GM12878 (cell line): ENCODE measurements at regions of chr20 and their contacts with region 1.

Region 1: DNA sequence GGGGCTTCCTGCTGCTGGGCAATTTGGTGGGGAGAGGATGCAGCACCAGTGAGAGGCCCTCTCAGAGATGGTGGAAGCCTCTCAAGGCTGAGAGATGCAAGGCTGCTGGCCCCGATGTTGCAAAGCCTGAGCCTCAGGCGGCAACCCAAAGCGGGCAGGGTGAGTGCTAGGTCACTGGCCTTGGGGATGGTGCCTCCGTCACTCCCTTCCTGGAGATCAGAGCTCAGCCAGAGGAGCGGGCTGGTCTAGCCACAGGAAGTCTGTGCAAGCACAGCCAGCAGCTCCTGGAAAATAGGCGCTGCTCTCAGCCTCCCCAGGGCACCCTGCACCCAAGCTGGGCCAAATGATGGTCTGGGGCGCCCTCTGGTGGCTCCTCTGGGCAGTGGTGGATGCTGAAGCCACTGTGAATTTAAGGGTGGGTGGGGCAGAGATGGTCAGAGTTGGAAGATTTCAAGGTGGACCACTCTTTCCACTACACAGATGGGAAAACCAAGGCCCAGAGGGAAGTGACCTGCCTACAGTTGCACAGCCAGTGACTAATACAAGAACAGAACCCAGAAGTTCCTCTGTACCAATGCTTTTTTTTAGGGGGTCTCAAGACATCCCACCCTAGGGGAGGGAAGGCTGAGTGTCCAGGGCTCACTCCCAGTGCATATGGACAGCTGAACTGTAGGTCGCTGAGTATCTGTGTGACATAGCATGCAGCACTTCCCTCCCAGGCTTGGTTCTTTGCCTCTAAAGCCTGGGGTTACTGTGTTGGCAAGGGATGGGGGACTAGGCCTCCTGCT is 20.8 kb downstream of the C20orf203 start:
- DNase-seq: no peak
- ATAC-seq: peak; percentile 98
- H3K4me3 ChIP-seq: no peak overlapping the region
- H3K27ac ChIP-seq: no peak overlapping the region
- H3K4me1 ChIP-seq: no peaks in the 10 kb centered on the region; the same call in 1 of the 2 replicates
- H3K27me3 ChIP-seq: no peaks in the 10 kb centered on the region
- CTCF ChIP-seq: peak; percentile 91 to 98 (median 93)
- EP300 ChIP-seq: no peak
- POLR2A ChIP-seq: no peak
- RAD21 ChIP-seq: peak; percentile 100

Region 2: GRCh38 chr20:32045999-32046398 is 606.9 kb before region 1 on chr20:
- CTCF ChIA-PET with region 1: no interaction called
- POLR2A ChIA-PET with region 1: no interaction called
- RAD21 ChIA-PET with region 1: no interaction called
- SMC1A ChIA-PET with region 1: no interaction called
- in situ Hi-C with region 1: no loop called
- intact Hi-C with region 1: no loop called
- DNase-seq: no peak
- ATAC-seq: no peak
- H3K4me3 ChIP-seq: no peak overlapping the region
- H3K27ac ChIP-seq: no peak overlapping the region
- H3K4me1 ChIP-seq: peaks cover 5% of the 10 kb centered on the region
- H3K27me3 ChIP-seq: no peaks in the 10 kb centered on the region; a peak in 1 of 4 replicates
- CTCF ChIP-seq: no peak
- EP300 ChIP-seq: no peak
- POLR2A ChIP-seq: no peak
- RAD21 ChIP-seq: no peak

Region 3: GRCh38 chr20:32336918-32337347 is 316.0 kb before region 1 on chr20:
- CTCF ChIA-PET with region 1: interaction called, 5 read pairs
- POLR2A ChIA-PET with region 1: no interaction called
- RAD21 ChIA-PET with region 1: no interaction called
- SMC1A ChIA-PET with region 1: interaction called, 4 read pairs
- in situ Hi-C with region 1: no loop called
- intact Hi-C with region 1: loop called (anchors 5 kb)
- DNase-seq: no peak
- ATAC-seq: peak; percentile 58
- H3K4me3 ChIP-seq: no peak overlapping the region
- H3K27ac ChIP-seq: no peak overlapping the region
- H3K4me1 ChIP-seq: peaks cover 29% of the 10 kb centered on the region
- H3K27me3 ChIP-seq: no peaks in the 10 kb centered on the region
- CTCF ChIP-seq: peak; percentile 62 to 71 (median 65)
- EP300 ChIP-seq: no peak
- POLR2A ChIP-seq: no peak
- RAD21 ChIP-seq: peak; percentile 78

Region 4: DNA sequence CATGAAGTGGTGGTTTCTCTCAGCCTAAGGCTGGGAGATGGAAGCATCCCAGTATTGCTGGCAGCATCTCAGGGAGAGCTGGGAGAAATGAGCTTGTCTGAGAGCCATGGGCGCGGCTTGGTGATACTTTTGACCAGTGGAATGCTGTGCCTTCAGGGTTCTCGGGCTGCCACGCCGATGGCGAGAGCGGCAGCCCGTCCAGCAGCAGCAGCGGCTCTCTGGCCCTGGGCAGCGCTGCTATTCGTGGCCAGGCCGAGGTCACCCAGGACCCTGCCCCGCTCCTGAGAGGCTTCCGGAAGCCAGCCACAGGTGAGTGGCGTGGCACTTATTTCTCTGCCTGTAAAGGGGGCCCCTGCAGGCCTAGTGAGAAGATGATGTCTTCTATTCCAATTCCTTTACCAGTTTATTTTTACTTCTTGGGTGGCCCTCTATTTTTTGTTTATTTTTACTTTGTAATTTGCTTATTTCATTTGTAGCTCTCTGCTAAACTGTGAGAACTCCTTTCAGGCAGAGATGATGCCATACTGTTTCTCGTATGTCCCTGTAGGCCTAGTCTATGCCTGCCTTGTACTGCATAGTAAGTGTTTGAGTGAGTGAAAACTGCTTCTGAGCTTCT is 223.1 kb before region 1 on chr20:
- CTCF ChIA-PET with region 1: no interaction called
- POLR2A ChIA-PET with region 1: no interaction called
- RAD21 ChIA-PET with region 1: no interaction called
- SMC1A ChIA-PET with region 1: no interaction called
- in situ Hi-C with region 1: no loop called
- intact Hi-C with region 1: no loop called
- DNase-seq: no peak
- ATAC-seq: no peak
- H3K4me3 ChIP-seq: no peak overlapping the region
- H3K27ac ChIP-seq: no peak overlapping the region
- H3K4me1 ChIP-seq: no peaks in the 10 kb centered on the region
- H3K27me3 ChIP-seq: no peaks in the 10 kb centered on the region
- CTCF ChIP-seq: no peak
- EP300 ChIP-seq: no peak
- POLR2A ChIP-seq: no peak
- RAD21 ChIP-seq: no peak

Region 5: GRCh38 chr20:32516583-32517517 is 136.1 kb before region 1 on chr20:
- CTCF ChIA-PET with region 1: interaction called, 264 read pairs
- POLR2A ChIA-PET with region 1: interaction called, 16 read pairs
- RAD21 ChIA-PET with region 1: interaction called, 186 read pairs
- SMC1A ChIA-PET with region 1: interaction called, 248 read pairs
- in situ Hi-C with region 1: loop called (anchors 5 kb)
- intact Hi-C with region 1: loop called (anchors 1 kb)
- DNase-seq: no peak
- ATAC-seq: no peak
- H3K4me3 ChIP-seq: no peak overlapping the region
- H3K27ac ChIP-seq: no peak overlapping the region
- H3K4me1 ChIP-seq: no peaks in the 10 kb centered on the region
- H3K27me3 ChIP-seq: no peaks in the 10 kb centered on the region
- CTCF ChIP-seq: no peak
- EP300 ChIP-seq: no peak
- POLR2A ChIP-seq: no peak
- RAD21 ChIP-seq: no peak

Region 6: GRCh38 chr20:32535953-32536823 is 116.7 kb before region 1 on chr20:
- CTCF ChIA-PET with region 1: interaction called, 14 read pairs
- POLR2A ChIA-PET with region 1: no interaction called
- RAD21 ChIA-PET with region 1: interaction called, 32 read pairs
- SMC1A ChIA-PET with region 1: interaction called, 6 read pairs
- in situ Hi-C with region 1: no loop called
- intact Hi-C with region 1: no loop called
- DNase-seq: no peak
- ATAC-seq: peak; percentile 76
- H3K4me3 ChIP-seq: peak overlapping the region; percentile 61
- H3K27ac ChIP-seq: peak overlapping the region; percentile 64
- H3K4me1 ChIP-seq: peaks cover 46% of the 10 kb centered on the region
- H3K27me3 ChIP-seq: no peaks in the 10 kb centered on the region
- CTCF ChIP-seq: no peak
- EP300 ChIP-seq: no peak
- POLR2A ChIP-seq: peak; percentile 45; the same call in 1 of the 2 replicates
- RAD21 ChIP-seq: no peak

Region 7: GRCh38 chr20:32599783-32600340 is 53.1 kb before region 1 on chr20:
- CTCF ChIA-PET with region 1: interaction called, 4 read pairs
- POLR2A ChIA-PET with region 1: no interaction called
- RAD21 ChIA-PET with region 1: interaction called, 9 read pairs
- SMC1A ChIA-PET with region 1: interaction called, 4 read pairs
- in situ Hi-C with region 1: no loop called
- intact Hi-C with region 1: loop called (anchors 10 kb)
- DNase-seq: no peak
- ATAC-seq: no peak
- H3K4me3 ChIP-seq: no peak overlapping the region
- H3K27ac ChIP-seq: no peak overlapping the region
- H3K4me1 ChIP-seq: peaks cover 24% of the 10 kb centered on the region
- H3K27me3 ChIP-seq: no peaks in the 10 kb centered on the region
- CTCF ChIP-seq: no peak
- EP300 ChIP-seq: no peak
- POLR2A ChIP-seq: no peak
- RAD21 ChIP-seq: no peak

Region 8: DNA sequence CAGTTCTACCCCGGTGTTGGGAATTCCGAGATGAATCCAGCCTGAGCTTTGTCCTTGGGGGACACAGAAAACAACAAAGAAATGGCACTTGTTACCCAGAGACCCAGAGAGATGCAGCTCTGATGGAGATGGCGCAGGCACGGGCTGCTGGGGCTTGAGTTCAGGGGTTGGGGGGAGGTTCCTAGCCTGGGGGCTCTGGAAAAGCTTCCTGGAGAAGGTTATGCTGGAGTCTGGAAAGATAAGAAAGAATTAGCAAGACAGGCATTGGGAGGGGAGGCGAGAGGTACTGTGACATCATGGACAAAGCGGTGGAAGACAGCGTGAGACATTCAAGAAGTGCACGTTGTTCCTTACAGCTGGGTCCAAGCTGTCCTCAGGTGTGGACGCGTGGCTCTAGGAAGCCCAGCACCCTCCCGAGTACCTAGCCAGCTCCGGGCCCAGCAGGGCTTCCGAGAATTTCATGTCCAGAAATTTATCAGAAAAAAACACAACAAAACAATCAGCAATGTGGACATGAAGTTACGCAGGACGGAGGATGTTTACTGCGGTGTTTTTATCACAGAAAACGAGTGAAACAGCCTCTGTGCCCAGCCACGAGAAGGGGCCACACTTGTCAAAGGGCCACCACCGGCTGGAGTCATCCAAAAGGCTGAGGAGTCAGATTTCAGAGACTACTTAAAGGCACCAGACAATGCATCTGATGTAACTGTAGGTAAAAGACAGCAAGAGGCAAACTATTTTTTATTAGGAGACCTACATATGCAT is 18.7 kb before region 1 on chr20:
- CTCF ChIA-PET with region 1: interaction called, 29 read pairs
- POLR2A ChIA-PET with region 1: no interaction called
- RAD21 ChIA-PET with region 1: interaction called, 5 read pairs
- SMC1A ChIA-PET with region 1: interaction called, 10 read pairs
- in situ Hi-C with region 1: no loop called
- intact Hi-C with region 1: no loop called
- DNase-seq: no peak
- ATAC-seq: no peak
- H3K4me3 ChIP-seq: no peak overlapping the region
- H3K27ac ChIP-seq: no peak overlapping the region
- H3K4me1 ChIP-seq: no peaks in the 10 kb centered on the region
- H3K27me3 ChIP-seq: no peaks in the 10 kb centered on the region; a peak in 2 of 4 replicates
- CTCF ChIP-seq: no peak
- EP300 ChIP-seq: no peak
- POLR2A ChIP-seq: no peak
- RAD21 ChIP-seq: no peak